Left ventricle myocardium inferior (tissue), 1 donor: ENCODE measurements at regions of chr3 and their contacts with region 1.

Region 1: DNA sequence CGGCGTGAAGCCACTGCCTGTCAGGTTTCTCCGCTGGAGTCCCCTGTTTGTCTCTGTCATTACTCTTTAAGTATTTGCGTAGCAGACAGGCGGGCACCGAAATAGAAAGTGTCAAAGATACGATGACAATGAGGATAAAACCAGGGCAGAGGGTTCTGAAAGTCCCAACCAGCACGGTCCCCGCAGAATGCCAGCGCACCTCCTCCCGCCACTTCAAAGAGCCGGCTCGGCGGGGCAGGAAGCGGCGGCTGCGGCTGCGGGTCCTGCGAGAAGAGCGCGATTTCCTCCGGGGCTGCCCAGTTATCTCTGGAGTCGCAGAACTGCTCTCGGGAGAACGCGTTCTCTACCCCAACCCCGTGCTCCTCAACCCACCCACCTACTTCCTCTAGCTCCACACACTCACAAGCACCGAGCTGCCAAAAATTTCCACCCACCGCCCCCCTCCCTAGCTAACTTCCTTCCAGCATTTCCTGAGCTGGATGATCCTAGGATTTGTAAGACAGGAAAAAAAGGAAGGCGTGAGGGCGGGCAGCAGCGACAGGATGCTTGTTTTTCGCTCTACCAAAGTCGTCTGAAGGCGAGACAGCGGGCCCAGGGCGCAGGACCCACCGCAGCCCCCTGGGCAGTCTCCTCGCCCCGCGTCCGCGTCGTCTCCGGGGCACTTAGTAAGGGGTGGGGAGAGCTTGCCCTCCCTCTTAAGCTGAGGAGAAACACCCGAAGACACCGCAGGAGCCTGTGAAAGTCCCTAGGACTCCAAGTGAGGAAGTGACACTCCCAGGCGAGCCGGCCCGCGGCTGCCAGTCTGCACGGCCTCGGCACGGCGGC is at the start of gene ARHGAP31:
- DNase-seq: peak; percentile 75
- H3K4me3 ChIP-seq: peak within 1 kb of the TSS; percentile 86
- H3K27ac ChIP-seq: peak within 1 kb of the TSS; percentile 98
- H3K4me1 ChIP-seq: peaks cover 73% of the 10 kb centered on the region
- H3K27me3 ChIP-seq: no peaks in the 10 kb centered on the region
- CTCF ChIP-seq: no peak
- total RNA-seq, gene ARHGAP31: 38.0 TPM

Region 2: GRCh38 chr3:119352849-119353502 is 58.9 kb after region 1 on chr3:
- intact Hi-C with region 1: loop called (anchors 10 kb)
- DNase-seq: no peak
- H3K4me3 ChIP-seq: no peak overlapping the region
- H3K27ac ChIP-seq: peak overlapping the region; percentile 83
- H3K4me1 ChIP-seq: peaks cover 80% of the 10 kb centered on the region
- H3K27me3 ChIP-seq: no peaks in the 10 kb centered on the region
- CTCF ChIP-seq: peak; percentile 52